ENCODE measurements at regions of chr10 and their contacts with region 1.

Region 1: DNA sequence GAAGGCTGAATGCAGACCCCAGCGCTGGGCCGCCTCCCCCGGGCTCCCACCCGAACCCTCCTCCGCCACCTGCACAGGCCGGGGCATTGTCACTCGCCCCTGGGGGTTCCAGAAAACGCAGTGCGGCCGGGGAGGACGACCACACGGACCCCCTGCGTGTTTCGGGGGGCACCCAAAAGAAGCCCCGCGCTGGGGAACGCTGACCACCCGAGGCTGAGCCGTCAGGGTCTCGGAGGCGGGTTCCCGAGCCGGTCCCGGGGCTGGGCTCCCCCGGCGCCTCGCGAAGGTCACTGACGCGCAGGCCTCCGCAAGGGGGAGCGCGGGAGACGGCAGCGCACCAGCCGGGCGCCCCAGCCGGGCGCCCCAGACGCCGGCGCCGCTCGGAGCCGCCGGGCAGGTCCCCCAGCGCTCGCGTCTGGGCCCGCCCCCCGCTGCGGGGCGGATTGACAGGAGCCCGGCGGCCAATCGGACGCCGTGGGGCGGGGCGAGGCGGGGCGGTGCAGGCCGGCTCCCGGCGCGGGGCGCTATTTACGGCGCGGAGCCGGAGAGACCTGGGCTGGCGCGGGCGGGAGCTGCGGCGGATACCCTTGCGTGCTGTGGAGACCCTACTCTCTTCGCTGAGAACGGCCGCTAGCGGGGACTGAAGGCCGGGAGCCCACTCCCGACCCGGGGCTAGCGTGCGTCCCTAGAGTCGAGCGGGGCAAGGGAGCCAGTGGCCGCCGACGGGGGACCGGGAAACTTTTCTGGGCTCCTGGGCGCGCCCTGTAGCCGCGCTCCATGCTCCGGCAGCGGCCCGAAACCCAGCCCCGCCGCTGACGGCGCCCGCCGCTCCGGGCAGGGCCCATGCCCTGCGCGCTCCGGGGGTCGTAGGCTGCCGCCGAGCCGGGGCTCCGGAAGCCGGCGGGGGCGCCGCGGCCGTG is at the start of gene BAMBI:
- DNase-seq: peak; percentile 93 to 100
- H3K4me3 ChIP-seq: peak within 1 kb of the TSS; percentile 90
- H3K4me3 Mint-ChIP-seq: peak within 1 kb of the TSS; percentile 99
- H3K27ac Mint-ChIP-seq: peak within 1 kb of the TSS; percentile 85
- H3K4me1 ChIP-seq: peaks cover 47% of the 10 kb centered on the region
- H3K4me1 Mint-ChIP-seq: peaks cover 26% of the 10 kb centered on the region
- H3K27me3 ChIP-seq: no peaks in the 10 kb centered on the region
- H3K27me3 Mint-ChIP-seq: no peaks in the 10 kb centered on the region
- CTCF ChIP-seq: peak; percentile 72 to 90
- total RNA-seq, gene BAMBI: 146 and 165 TPM in 2 replicates

Region 2: DNA sequence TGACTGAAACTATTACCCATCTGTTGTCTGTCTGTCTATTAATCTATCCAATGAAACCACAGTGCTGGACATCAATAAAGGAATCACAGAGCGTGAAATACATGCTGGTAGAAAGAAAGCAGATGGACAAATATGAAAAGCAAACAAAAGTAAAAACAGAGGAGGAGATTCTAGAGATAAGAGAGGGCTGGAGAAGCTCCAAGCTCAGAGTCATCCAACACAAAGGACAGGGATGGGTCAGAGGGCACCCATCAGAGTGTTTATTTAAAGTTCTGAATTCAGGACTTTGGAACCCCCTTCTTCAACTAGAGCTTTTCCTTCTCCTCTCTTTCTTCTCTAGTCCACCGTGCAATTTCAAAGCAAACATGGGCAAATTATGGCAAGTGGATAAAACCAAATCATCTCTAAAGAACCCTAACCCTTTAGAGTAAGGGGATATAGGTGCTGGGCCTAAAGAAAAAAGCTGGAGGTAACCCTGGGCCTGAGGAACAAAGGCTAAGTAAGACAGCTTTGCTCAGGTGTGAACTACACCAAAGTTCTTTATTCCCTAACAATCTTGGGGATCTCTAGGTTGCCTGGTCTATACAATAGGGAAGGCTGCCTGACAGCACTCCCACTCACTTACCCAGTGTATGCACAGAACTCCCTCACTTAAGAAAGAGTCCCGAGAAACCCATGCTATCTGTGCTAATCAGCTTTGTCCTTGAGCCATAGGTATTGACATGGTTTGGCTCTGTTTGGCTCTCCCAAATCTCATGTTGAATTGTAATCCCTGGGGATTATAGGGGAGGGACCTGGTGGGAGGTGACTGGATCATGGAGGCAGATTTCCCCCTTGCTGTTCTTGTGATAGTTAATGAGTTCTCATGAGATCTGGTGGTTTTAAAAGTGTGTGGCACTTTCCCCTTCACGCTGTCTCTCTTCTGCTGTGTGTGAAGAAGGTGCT is 97.1 kb after region 1 on chr10:
- CTCF ChIA-PET with region 1: interaction called, 5 read pairs
- POLR2A ChIA-PET with region 1: no interaction called
- intact Hi-C with region 1: loop called (anchors 1 kb)
- DNase-seq: peak; percentile 63 to 70
- H3K4me3 ChIP-seq: no peak overlapping the region
- H3K4me3 Mint-ChIP-seq: peak overlapping the region; percentile 47
- H3K27ac Mint-ChIP-seq: peak overlapping the region; percentile 74
- H3K4me1 ChIP-seq: peaks cover 36% of the 10 kb centered on the region
- H3K4me1 Mint-ChIP-seq: peaks cover 31% of the 10 kb centered on the region
- H3K27me3 ChIP-seq: no peaks in the 10 kb centered on the region
- H3K27me3 Mint-ChIP-seq: no peaks in the 10 kb centered on the region
- CTCF ChIP-seq: no peak

Region 3: DNA sequence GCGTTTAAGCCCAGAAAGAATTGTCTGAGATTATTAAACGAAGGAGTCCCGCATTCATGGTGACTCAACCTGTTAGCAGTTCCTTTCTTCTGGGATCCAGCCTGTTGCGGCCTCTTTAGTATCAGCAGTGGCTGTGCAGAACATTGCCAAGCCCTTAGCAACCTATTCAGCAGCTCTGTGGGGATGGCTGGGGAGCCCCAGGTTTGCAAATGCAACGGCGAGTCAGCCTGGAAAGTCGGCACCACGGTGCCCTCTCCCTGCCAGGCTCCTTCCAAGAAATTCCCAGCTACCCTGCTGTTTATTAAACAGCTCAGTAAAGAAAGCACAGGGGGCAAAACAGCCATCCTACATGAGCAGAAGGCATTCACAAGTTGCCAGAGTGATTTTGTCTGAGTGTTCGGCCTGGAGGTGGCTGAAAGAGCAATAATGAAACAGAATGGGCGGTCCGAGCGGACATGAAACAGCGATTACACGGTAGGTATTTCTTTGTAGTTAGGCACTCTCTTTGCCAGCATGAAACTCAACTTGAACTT is 198.4 kb after region 1 on chr10:
- CTCF ChIA-PET with region 1: no interaction called
- POLR2A ChIA-PET with region 1: no interaction called
- intact Hi-C with region 1: loop called (anchors 2 kb)
- DNase-seq: no peak
- H3K4me3 ChIP-seq: no peak overlapping the region
- H3K4me3 Mint-ChIP-seq: no peak overlapping the region
- H3K27ac Mint-ChIP-seq: no peak overlapping the region
- H3K4me1 ChIP-seq: peaks cover 16% of the 10 kb centered on the region
- H3K4me1 Mint-ChIP-seq: peaks cover 7% of the 10 kb centered on the region
- H3K27me3 ChIP-seq: no peaks in the 10 kb centered on the region
- H3K27me3 Mint-ChIP-seq: no peaks in the 10 kb centered on the region
- CTCF ChIP-seq: no peak

Region 4: DNA sequence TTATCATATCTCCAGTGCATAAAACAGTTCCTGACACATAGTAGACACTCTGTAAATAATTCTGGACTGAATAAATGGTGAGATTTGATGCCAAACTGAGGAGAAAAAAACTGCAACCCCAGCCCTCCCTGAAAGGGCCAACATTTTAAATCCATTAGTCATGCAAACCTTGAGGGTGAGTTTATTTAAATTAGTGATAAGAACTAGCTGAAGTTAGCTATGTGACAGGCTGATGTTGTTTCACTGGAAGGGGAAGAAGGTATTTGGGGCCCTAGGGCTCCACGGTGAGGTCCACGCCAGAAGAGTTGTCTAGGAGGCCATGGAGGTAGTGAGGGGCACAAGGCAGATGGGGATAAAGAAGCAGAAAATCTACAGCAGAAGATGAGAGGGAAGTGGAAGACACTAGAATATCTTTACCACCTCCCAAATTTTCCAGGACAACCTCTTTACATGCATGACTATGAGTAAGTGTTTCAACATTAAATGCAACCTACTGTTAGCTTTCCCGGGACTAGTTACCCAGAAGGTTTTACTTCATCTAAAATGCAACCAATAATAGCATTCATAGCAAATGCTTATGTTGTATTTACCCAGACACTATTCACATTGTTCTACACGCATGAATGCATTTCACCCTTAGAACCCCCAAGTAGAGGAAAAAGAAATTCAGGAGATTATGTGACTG is 428.4 kb after region 1 on chr10:
- CTCF ChIA-PET with region 1: no interaction called
- POLR2A ChIA-PET with region 1: no interaction called
- intact Hi-C with region 1: loop called (anchors 1 kb)
- DNase-seq: peak; percentile 50 to 55
- H3K4me3 ChIP-seq: no peak overlapping the region
- H3K4me3 Mint-ChIP-seq: peak overlapping the region; percentile 64
- H3K27ac Mint-ChIP-seq: peak overlapping the region; percentile 88
- H3K4me1 ChIP-seq: peaks cover 80% of the 10 kb centered on the region
- H3K4me1 Mint-ChIP-seq: peaks cover 70% of the 10 kb centered on the region
- H3K27me3 ChIP-seq: no peaks in the 10 kb centered on the region
- H3K27me3 Mint-ChIP-seq: no peaks in the 10 kb centered on the region
- CTCF ChIP-seq: no peak

Region 5: GRCh38 chr10:29257106-29257783 is 580.0 kb after region 1 on chr10:
- CTCF ChIA-PET with region 1: interaction called, 3 read pairs
- POLR2A ChIA-PET with region 1: no interaction called
- intact Hi-C with region 1: loop called (anchors 5 kb)
- DNase-seq: peak; percentile 73
- H3K4me3 ChIP-seq: no peak overlapping the region
- H3K4me3 Mint-ChIP-seq: peak overlapping the region; percentile 55
- H3K27ac Mint-ChIP-seq: peak overlapping the region; percentile 90
- H3K4me1 ChIP-seq: peaks cover 65% of the 10 kb centered on the region
- H3K4me1 Mint-ChIP-seq: peaks cover 57% of the 10 kb centered on the region
- H3K27me3 ChIP-seq: no peaks in the 10 kb centered on the region
- H3K27me3 Mint-ChIP-seq: no peaks in the 10 kb centered on the region
- CTCF ChIP-seq: no peak